MCF 10A (cell line): ENCODE measurements at regions of chr15 and their contacts with region 1.

Region 1: GRCh38 chr15:50315814-50316630 is 39.0 kb downstream of the GABPB1 start:
- DNase-seq: peak; percentile 58
- H3K4me3 Mint-ChIP-seq: no peak overlapping the region
- H3K27ac Mint-ChIP-seq: no peak overlapping the region
- H3K4me1 Mint-ChIP-seq: no peaks in the 10 kb centered on the region
- H3K27me3 Mint-ChIP-seq: no peaks in the 10 kb centered on the region
- CTCF ChIP-seq: peak; percentile 59

Region 2: DNA sequence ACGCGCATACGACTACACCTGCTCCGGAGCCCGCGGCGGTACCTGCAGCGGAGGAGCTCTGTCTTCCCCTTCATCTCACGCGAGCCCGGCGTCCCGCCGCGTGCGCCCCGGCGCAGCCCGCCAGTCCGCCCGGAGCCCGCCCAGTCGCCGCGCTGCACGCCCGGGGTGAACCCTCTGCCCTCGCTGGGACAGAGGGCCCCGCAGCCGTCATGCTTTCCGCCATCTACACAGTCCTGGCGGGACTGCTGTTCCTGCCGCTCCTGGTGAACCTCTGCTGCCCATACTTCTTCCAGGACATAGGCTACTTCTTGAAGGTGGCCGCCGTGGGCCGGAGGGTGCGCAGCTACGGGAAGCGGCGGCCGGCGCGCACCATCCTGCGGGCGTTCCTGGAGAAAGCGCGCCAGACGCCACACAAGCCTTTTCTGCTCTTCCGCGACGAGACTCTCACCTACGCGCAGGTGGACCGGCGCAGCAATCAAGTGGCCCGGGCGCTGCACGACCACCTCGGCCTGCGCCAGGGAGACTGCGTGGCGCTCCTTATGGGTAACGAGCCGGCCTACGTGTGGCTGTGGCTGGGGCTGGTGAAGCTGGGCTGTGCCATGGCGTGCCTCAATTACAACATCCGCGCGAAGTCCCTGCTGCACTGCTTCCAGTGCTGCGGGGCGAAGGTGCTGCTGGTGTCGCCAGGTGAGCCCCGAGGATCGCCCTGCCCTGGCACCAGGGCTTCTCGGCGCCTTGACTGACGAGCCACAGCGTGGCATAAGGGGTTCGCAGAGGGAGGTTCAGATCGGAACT is 133.6 kb before region 1 on chr15:
- CTCF ChIA-PET with region 1: interaction called, 32 read pairs
- POLR2A ChIA-PET with region 1: no interaction called
- intact Hi-C with region 1: loop called (anchors 10 kb)
- DNase-seq: peak; percentile 41
- H3K4me3 Mint-ChIP-seq: peak overlapping the region; percentile 78
- H3K27ac Mint-ChIP-seq: no peak overlapping the region
- H3K4me1 Mint-ChIP-seq: peaks cover 4% of the 10 kb centered on the region
- H3K27me3 Mint-ChIP-seq: peaks cover 11% of the 10 kb centered on the region
- CTCF ChIP-seq: no peak

Region 3: DNA sequence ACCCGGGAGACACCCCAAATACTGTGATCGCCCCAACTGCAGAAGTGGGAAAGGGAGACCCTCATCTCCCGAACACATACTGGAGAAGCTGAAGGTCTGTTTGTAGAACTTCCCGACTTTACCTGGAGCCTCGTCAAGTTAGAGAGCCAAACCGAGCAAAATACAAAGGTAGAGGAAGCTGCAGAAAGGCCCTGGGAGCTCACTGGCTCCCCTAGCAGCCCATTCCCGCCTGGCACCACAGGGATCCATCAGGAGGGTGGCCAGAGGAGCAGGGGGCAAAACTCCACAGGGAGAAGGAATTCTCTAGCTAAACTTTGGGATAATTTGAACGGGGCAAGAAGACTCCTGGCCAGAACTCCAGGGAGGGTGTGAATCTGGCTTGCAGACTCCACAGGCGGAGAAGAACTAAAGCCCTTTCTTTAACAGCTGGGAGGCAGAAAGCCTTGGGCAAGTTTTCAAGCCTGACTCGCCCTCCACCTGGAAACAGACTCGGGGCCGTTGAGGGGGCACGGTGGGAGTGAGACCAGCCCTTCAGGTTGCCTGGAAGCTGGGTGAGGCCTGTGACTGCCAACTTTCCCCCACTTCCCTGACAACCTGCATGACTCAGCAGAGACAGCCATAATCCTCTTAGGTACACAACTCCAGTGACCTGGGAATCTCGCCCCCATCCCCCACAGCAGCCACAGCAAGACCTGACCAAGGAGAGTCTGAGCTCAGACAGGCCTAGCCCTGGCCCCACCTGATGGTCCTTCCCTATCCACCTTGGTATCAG is 105.5 kb before region 1 on chr15:
- CTCF ChIA-PET with region 1: no interaction called
- POLR2A ChIA-PET with region 1: no interaction called
- intact Hi-C with region 1: no loop called
- DNase-seq: peak; percentile 56
- H3K4me3 Mint-ChIP-seq: no peak overlapping the region
- H3K27ac Mint-ChIP-seq: peak overlapping the region; percentile 49
- H3K4me1 Mint-ChIP-seq: peaks cover 14% of the 10 kb centered on the region
- H3K27me3 Mint-ChIP-seq: no peaks in the 10 kb centered on the region
- CTCF ChIP-seq: no peak

Region 4: DNA sequence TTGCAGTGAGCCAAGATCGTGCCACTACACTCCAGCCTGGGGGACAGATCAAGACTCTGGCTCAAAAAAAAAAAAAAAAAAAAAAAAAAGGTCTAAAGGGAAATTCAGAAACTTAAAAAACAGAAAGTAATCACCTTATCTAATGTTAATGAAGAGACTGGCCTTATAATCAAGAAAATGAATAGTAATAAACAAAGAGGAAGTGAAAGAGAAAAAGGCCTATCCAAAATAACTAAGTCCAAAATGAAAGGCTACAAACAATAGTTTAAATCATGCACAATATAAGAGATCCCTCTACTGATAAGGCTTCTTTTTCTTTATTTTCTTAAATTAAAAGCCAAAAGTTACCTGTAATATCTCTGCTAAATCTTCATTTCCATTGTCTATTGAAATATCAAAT is 13.4 kb before region 1 on chr15:
- CTCF ChIA-PET with region 1: interaction called, 14 read pairs
- POLR2A ChIA-PET with region 1: no interaction called
- intact Hi-C with region 1: no loop called
- DNase-seq: no peak
- H3K4me3 Mint-ChIP-seq: no peak overlapping the region
- H3K27ac Mint-ChIP-seq: no peak overlapping the region
- H3K4me1 Mint-ChIP-seq: no peaks in the 10 kb centered on the region
- H3K27me3 Mint-ChIP-seq: no peaks in the 10 kb centered on the region
- CTCF ChIP-seq: no peak

Region 5: GRCh38 chr15:50330921-50331320 is 14.9 kb after region 1 on chr15:
- CTCF ChIA-PET with region 1: interaction called, 20 read pairs
- POLR2A ChIA-PET with region 1: no interaction called
- intact Hi-C with region 1: no loop called
- DNase-seq: no peak
- H3K4me3 Mint-ChIP-seq: no peak overlapping the region
- H3K27ac Mint-ChIP-seq: no peak overlapping the region
- H3K4me1 Mint-ChIP-seq: peaks cover 14% of the 10 kb centered on the region
- H3K27me3 Mint-ChIP-seq: no peaks in the 10 kb centered on the region
- CTCF ChIP-seq: no peak

Region 6: DNA sequence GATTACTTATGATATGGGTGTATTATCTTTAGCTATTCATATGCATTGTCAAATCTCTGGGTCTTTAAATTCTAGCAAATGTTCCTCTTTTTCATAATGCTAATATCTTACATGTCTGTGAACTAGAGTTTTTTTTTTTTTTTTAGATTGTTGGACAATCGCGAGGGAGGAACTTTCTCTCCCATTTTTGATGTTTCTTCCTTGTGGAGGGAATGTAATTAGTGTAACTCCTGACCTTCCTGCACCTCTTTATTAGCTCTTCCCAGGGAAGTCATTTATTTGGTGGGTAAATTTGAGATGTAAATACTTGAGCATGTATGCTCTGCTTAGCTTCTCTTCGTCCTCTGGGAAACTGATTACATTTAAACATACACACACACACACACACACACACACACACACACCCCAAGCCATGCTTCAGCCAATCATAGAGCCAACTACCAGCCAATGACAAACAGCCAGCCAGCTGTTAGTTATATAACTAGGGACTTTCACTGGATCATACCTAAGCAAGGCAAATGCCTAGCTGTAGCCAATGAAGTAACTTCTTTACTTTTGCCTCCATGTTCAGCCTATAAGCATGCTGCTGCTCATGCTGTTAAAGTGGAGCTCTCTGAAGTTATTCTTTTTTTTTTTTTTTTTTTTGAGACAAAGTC is 99.9 kb after region 1 on chr15:
- CTCF ChIA-PET with region 1: no interaction called
- POLR2A ChIA-PET with region 1: no interaction called
- intact Hi-C with region 1: no loop called
- DNase-seq: no peak
- H3K4me3 Mint-ChIP-seq: no peak overlapping the region
- H3K27ac Mint-ChIP-seq: no peak overlapping the region
- H3K4me1 Mint-ChIP-seq: no peaks in the 10 kb centered on the region
- H3K27me3 Mint-ChIP-seq: no peaks in the 10 kb centered on the region
- CTCF ChIP-seq: no peak